ENCODE measurements at regions of chr2 and their contacts with region 1.

Region 1: DNA sequence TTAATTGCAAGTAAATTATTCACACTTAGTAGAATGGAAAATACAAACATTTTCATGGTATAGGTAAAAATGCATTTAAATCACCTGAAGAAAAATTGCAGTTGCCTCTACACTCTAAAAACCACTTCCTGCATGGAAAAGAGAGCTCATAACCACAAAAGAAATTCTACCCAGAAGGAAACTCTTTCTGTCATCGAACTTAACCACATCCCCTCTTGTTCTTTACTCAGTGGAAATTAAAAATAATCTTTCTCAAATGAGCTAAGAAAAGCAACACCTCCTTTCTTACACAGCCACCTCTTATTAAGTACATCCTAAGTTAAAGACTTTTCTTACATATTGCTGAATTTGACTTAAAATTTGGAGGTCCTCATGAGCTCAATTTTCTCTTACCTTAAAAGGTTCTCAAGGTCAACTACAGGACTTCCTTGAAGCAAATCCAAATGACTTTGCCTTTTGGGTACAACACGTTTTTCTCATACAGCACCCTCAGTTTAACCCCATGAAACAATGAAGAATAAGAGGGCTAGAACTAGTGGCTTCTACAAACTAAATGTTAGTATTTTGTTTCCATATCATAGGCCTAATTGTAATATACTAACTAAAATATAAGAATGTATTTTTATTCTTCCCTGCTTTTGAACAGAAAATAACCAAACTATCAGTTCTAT is 109.1 kb upstream of the CRIM1 start:
- DNase-seq: no peak
- H3K4me3 Mint-ChIP-seq: peak overlapping the region; percentile 44
- H3K27ac Mint-ChIP-seq: peak overlapping the region; percentile 81
- H3K4me1 Mint-ChIP-seq: peaks cover 52% of the 10 kb centered on the region
- H3K27me3 Mint-ChIP-seq: peaks cover 2% of the 10 kb centered on the region

Region 2: GRCh38 chr2:35858216-35858615 is 388.2 kb before region 1 on chr2:
- intact Hi-C with region 1: no loop called
- DNase-seq: no peak
- H3K4me3 Mint-ChIP-seq: no peak overlapping the region
- H3K27ac Mint-ChIP-seq: no peak overlapping the region
- H3K4me1 Mint-ChIP-seq: no peaks in the 10 kb centered on the region
- H3K27me3 Mint-ChIP-seq: no peaks in the 10 kb centered on the region

Region 3: DNA sequence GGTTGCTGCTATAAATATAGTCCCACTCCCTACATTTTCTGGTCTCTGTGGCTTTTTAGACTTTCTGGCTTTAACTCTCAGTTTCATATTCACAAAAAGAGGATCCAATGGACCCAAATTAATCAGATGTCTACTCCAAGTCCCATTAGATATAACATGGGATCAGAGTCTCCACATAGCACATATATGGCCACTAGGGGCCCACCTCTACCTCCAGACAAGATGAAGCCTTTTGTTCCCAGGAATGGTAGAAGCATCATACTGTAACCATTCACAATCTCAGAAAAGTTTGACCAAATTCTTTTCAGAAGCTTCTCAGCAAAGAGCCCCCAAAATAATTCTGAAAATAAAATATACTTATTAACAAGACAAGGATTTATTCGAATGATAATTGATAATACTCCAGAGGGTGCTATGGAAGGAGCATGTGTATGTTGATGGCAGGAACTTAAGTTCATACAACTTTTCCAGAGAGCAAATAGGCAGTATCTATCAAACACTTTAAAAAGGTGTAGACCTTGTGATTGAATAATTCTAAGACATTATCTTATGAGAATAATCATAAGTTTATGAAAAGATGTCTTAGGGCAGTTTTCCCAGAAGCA is 273.2 kb before region 1 on chr2:
- intact Hi-C with region 1: loop called (anchors 5 kb)
- DNase-seq: no peak
- H3K4me3 Mint-ChIP-seq: no peak overlapping the region
- H3K27ac Mint-ChIP-seq: no peak overlapping the region
- H3K4me1 Mint-ChIP-seq: peaks cover 3% of the 10 kb centered on the region
- H3K27me3 Mint-ChIP-seq: peaks cover 12% of the 10 kb centered on the region

Region 4: DNA sequence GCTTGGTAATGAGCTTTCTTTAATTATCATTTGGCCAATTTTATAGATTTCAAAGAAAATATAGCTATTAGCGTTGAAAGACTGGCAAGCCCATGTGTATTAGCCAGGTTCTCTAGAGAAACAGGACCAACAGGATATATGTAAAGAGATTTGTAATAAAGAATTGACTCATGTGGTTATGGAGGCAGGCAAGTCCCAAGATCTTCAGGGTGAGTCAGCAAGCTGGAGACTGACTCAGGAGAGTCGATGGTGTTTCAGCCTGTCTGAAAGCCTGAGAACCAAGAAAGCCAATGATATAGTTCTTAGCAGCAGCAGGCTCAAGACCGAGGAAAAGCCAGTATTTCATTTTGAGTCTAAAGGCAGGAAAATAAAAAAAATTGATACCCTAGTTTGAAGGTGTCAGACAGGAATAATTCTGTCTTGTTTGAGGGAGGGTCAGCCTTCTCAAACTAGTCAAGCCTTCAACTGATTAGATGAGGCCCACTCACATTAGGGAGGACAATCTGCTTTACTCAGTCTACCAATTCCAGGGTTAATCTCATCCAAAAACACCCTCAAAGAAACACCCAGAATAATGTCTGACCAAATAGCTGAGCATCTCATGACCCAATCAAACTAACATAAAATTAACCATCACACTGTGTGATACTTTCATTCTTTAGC is 30.8 kb after region 1 on chr2:
- intact Hi-C with region 1: loop called (anchors 1 kb)
- DNase-seq: no peak
- H3K4me3 Mint-ChIP-seq: no peak overlapping the region
- H3K27ac Mint-ChIP-seq: no peak overlapping the region
- H3K4me1 Mint-ChIP-seq: peaks cover 9% of the 10 kb centered on the region
- H3K27me3 Mint-ChIP-seq: peaks cover 5% of the 10 kb centered on the region

Region 5: GRCh38 chr2:36307441-36307840 is 61.0 kb after region 1 on chr2:
- intact Hi-C with region 1: loop called (anchors 1 kb)
- DNase-seq: no peak
- H3K4me3 Mint-ChIP-seq: no peak overlapping the region
- H3K27ac Mint-ChIP-seq: no peak overlapping the region
- H3K4me1 Mint-ChIP-seq: peaks cover 21% of the 10 kb centered on the region
- H3K27me3 Mint-ChIP-seq: peaks cover 5% of the 10 kb centered on the region

Region 6: GRCh38 chr2:36318531-36318930 is 72.1 kb after region 1 on chr2:
- intact Hi-C with region 1: no loop called
- DNase-seq: no peak
- H3K4me3 Mint-ChIP-seq: no peak overlapping the region
- H3K27ac Mint-ChIP-seq: no peak overlapping the region
- H3K4me1 Mint-ChIP-seq: no peaks in the 10 kb centered on the region
- H3K27me3 Mint-ChIP-seq: peaks cover 21% of the 10 kb centered on the region

Region 7: DNA sequence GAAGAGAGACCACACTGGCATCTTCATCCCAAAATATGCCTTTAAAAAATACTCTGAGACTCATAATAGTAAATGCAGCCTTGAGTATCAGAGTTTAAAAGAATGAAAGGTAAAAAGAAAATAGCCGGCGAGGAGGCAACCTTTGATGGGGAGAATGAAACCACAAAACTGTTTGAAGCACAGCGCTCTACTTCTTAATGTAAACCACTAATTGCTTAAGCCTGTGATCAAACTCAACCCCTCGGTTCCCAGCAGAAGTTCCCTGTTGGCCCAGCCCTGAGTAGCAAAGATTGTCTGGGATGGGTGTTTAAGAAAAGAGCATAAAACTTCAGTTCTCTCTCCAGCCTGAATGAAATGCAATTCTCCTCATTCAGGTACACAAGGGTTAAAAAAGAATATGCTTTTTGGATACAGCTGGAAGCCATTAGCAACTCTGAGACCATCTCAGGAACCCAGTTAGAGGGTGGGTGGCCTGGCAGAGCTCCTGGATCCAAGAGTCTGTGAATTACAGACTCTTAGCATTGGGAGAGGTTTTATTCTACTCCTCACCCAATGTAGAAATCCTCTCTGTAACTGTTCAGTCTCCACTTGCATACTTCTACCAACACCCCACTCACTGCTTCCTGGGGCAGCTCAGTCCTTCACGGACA is 494.9 kb after region 1 on chr2:
- intact Hi-C with region 1: no loop called
- DNase-seq: no peak
- H3K4me3 Mint-ChIP-seq: no peak overlapping the region
- H3K27ac Mint-ChIP-seq: no peak overlapping the region
- H3K4me1 Mint-ChIP-seq: no peaks in the 10 kb centered on the region
- H3K27me3 Mint-ChIP-seq: peaks cover 37% of the 10 kb centered on the region

Region 8: DNA sequence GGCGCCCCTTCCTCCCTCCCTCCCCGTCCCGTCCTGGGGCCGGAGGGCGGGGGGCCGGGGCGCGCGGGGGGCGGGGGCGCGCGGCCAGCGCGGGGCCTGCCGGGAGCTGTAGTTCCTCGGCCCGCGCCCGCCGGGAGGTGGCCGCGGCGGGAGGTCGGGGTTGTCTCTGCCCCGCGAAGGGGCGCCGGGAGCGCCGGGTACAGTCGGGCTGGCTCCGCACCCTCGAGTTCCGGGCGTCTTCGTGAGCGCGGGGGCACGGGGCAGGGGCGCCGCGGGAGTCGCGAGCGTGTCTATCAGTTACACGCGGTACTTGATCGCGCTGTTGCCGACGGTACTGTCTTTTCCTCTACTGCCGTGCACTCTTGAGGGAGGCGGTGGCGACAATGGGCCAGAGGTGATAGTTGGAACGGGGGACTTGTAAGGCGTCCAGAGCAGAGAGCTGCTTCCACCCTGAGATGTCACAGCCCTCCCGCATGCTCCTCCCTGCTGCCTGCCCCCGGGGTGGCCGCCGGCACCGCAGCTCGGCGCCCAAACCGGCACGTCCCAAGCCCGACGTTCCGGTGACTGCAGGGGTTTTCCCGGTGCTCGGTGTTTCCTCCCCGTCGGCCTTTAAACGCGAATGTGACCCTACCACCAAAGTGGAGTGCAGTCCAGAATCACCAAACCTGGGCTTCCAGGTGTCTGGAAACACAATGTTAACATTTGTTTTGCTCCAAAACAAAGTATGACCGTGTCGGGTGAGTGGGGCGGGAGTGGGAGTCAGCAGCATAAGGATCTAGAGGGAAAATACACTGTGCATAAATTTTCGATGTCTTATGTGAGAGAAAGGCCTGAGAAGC is 1078.5 kb after region 1 on chr2 and contains the start of gene PRKD3:
- intact Hi-C with region 1: loop called (anchors 10 kb)
- DNase-seq: peak; percentile 34
- H3K4me3 Mint-ChIP-seq: peak within 1 kb of the TSS; percentile 94
- H3K27ac Mint-ChIP-seq: peak within 1 kb of the TSS; percentile 90
- H3K4me1 Mint-ChIP-seq: peaks cover 33% of the 10 kb centered on the region
- H3K27me3 Mint-ChIP-seq: peaks cover 51% of the 10 kb centered on the region
- total RNA-seq, gene PRKD3: 11.9 and 14.0 TPM in 2 replicates